IMR-90 (cell line): ENCODE measurements at regions of chr22 and their contacts with region 1.

Region 1: GRCh38 chr22:44697423-44698141 is 4.4 kb upstream of the PRR5 start:
- DNase-seq: peak; percentile 65
- ATAC-seq: peak; percentile 32
- H3K4me3 ChIP-seq: no peak overlapping the region
- H3K27ac ChIP-seq: peak overlapping the region; percentile 73; the same call in 1 of the 2 replicates
- H3K4me1 ChIP-seq: peaks cover 30% of the 10 kb centered on the region
- H3K27me3 ChIP-seq: no peaks in the 10 kb centered on the region
- CTCF ChIP-seq: peak; percentile 93
- POLR2A ChIP-seq: 0 out of 2 replicates have a peak, but pooled peaks have one; percentile 27
- RAD21 ChIP-seq: peak; percentile 92

Region 2: GRCh38 chr22:44735540-44736488 is 38.2 kb after region 1 on chr22:
- CTCF ChIA-PET with region 1: interaction called, 5 read pairs
- POLR2A ChIA-PET with region 1: no interaction called
- dilution Hi-C with region 1: no loop called
- in situ Hi-C with region 1: loop called (anchors 5 kb)
- intact Hi-C with region 1: loop called (anchors 1 kb)
- DNase-seq: peak; percentile 41
- ATAC-seq: peak; percentile 74
- H3K4me3 ChIP-seq: no peak overlapping the region
- H3K27ac ChIP-seq: no peak overlapping the region
- H3K4me1 ChIP-seq: peaks cover 21% of the 10 kb centered on the region
- H3K27me3 ChIP-seq: no peaks in the 10 kb centered on the region
- CTCF ChIP-seq: peak; percentile 92
- POLR2A ChIP-seq: no peak
- RAD21 ChIP-seq: peak; percentile 92